Posterior vena cava (tissue), 2 donors: ENCODE measurements at regions of chr10 and their contacts with region 1.

Region 1: DNA sequence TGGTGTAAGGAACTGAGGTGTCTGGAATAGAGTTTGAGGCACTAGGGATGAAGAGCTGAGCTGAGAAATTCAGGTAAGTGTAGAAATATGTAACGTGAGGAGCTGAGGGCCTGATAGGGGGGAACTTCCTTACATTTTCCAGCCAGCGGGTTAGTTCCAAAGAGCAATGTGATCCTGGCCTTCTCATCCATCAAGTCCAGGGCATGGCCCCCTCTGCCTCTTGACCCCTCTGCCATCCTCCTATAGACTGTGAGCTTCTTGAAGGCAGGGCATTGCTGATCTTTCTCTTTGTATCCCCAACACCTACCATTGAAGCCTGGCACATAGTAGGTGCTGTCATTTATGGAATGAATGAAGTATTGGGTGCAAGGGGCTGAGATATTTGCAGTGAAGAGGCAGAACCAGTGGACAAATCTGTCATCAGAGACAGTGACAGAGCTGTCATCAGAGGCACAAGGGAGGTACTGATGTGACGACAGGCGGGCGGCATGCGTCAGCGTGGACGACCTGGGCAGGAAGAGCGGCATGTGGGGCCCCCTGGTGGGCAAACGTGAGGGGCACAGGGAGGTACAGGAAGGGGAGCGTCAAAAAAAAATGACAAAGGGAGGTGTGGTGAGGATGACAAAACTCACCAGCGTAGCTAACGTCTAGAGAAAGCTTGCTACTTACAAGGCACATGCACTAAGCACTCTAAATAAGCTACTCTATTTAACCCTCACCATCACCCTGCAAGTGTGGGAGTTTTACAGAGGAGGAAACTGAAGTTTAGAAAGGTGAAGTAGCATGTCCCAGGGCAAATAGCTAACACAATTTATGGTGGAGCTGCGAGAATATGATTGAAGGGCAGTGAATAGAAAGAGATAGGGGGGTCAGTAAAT is 5.2 kb upstream of the CAMK2G start:
- DNase-seq: peak; percentile 97

Region 2: DNA sequence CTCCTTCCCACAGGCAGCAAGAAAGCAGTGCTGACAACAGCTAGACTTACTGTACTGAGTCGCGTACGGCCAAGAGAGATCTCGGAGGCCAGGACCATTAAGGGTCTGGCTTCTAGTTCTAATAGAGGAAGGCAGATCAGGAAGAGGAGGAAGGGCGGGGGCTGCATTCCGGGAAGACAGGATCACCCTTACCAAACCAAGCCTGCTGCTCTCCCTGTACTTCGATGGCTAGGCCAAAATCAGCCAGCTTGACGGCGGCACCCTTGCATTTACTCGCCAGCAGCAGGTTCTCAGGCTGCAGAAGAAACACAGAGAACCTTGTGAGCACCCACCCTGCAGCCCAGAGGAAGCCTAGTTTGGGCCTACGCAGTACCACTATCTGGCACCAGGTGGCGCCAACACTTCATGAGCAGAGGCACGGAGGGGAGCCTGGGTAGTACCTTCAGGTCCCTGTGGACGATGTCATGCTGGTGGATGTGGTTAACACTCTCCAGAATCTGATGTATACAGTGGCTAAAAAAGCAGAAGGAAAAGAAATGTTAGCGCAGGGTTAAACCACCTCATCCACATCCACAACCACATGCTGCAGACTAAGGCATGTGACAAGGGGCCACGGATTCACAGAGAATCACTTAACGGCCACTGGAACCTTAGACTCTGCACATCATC is 30.6 kb before region 1 on chr10:
- intact Hi-C with region 1: loop called (anchors 2 to 5 kb)
- DNase-seq: peak; percentile 96

Region 3: DNA sequence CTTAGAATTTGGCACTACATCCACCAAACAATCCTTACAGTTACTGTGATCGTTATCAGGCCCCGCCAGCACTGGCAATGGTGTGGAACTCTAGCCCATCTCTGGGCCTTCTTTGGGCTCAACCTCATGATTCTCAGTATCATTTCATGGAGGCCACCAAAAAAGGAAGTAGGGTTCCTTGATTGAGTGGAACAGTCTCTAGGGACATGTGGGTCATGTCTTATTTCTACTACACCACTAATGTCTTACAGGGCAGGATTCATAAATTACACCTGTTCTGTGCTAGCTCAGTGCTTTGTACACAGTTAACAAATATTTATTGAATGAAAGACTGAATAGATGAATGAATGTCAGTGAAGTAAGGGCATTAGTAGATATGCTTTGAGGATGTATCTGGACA is 217.2 kb after region 1 on chr10:
- intact Hi-C with region 1: loop called in 1 of 2 experiments (anchors 10 kb)
- DNase-seq: no peak